ENCODE measurements at regions of chr11 and their contacts with region 1.

Region 1: GRCh38 chr11:43341159-43341558 is 17.6 kb upstream of the TTC17 start:
- DNase-seq: no peak
- ATAC-seq: no peak
- H3K4me3 ChIP-seq: no peak overlapping the region
- H3K27ac ChIP-seq: no peak overlapping the region
- H3K4me1 ChIP-seq: no peaks in the 10 kb centered on the region
- H3K27me3 ChIP-seq: no peaks in the 10 kb centered on the region
- CTCF ChIP-seq: no peak

Region 2: DNA sequence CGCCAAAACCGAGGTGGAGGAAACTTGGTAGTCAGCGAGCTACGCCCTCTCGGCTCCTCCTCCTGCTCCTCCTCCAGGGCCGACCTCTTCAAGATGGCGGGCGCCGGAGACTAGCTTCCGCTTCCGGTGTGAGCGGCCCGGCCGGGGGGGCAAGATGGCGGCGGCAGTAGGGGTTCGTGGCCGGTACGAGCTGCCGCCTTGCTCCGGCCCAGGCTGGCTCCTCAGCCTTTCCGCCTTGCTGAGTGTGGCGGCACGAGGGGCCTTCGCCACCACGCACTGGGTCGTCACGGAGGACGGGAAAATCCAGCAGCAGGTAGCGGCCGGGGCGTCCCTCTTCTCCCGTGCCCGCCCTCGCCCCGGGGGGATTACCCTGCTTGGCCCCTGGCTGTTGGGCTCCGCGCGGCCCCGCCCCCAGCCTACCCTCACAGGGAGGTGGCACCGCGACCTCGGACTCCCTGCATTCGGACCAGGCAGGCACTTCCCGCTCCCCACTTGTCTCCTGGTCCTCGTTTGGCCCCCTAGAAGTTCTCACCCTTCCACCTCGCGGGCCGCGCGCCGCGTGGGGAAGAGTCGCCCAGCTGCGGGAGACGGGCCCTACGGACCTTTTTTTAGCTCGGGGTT is 17.8 kb after region 1 on chr11 and contains the start of gene TTC17:
- CTCF ChIA-PET with region 1: no interaction called
- POLR2A ChIA-PET with region 1: interaction called, 14 read pairs
- in situ Hi-C with region 1: no loop called
- intact Hi-C with region 1: no loop called
- DNase-seq: no peak
- ATAC-seq: peak; percentile 99
- H3K4me3 ChIP-seq: peak within 1 kb of the TSS; percentile 80 to 100
- H3K27ac ChIP-seq: peak within 1 kb of the TSS; percentile 98
- H3K4me1 ChIP-seq: peaks cover 19% of the 10 kb centered on the region
- H3K27me3 ChIP-seq: no peaks in the 10 kb centered on the region
- CTCF ChIP-seq: no peak
- total RNA-seq, gene TTC17: 54.2 TPM

Region 3: DNA sequence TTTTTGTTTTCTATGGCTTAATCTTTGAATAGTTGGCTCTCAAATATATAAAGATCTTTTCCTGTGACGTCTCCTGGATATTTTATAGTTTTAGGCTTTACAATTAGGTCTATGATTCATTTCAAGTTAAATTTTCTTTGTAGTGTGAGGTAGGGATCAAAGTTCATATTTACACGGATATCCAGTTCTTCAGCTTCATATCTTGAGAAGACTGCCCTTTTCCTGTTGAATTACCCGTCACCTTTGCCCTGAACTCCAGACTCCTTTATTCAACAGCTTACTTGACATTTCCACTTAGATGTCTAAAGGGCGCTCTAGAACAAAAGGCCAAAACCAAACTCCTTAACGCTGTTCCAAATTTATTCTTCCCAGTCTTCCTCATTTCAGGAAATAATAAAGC is 69.2 kb after region 1 on chr11:
- CTCF ChIA-PET with region 1: no interaction called
- POLR2A ChIA-PET with region 1: no interaction called
- in situ Hi-C with region 1: no loop called
- intact Hi-C with region 1: no loop called
- DNase-seq: no peak
- ATAC-seq: no peak
- H3K4me3 ChIP-seq: no peak overlapping the region
- H3K27ac ChIP-seq: no peak overlapping the region
- H3K4me1 ChIP-seq: no peaks in the 10 kb centered on the region
- H3K27me3 ChIP-seq: no peaks in the 10 kb centered on the region
- CTCF ChIP-seq: no peak

Measured in Panc1 (cell line).